ENCODE measurements at regions of chr20 and their contacts with region 1.

Region 1: GRCh38 chr20:48904365-48905296 is 16.9 kb upstream of the ARFGEF2 start:
- DNase-seq: peak; percentile 60
- ATAC-seq: peak; percentile 77
- H3K4me3 ChIP-seq: no peak overlapping the region
- H3K27ac ChIP-seq: no peak overlapping the region
- H3K4me1 ChIP-seq: no peaks in the 10 kb centered on the region
- H3K27me3 ChIP-seq: peaks cover 14% of the 10 kb centered on the region
- CTCF ChIP-seq: peak; percentile 89
- POLR2A ChIP-seq: 0 out of 2 replicates have a peak, but pooled peaks have one; percentile 34
- RAD21 ChIP-seq: peak; percentile 91

Region 2: GRCh38 chr20:48635433-48636310 is 269.0 kb before region 1 on chr20:
- CTCF ChIA-PET with region 1: no interaction called
- POLR2A ChIA-PET with region 1: no interaction called
- dilution Hi-C with region 1: no loop called
- in situ Hi-C with region 1: no loop called
- intact Hi-C with region 1: loop called (anchors 1 kb)
- DNase-seq: peak; percentile 31
- ATAC-seq: peak; percentile 88
- H3K4me3 ChIP-seq: no peak overlapping the region
- H3K27ac ChIP-seq: no peak overlapping the region
- H3K4me1 ChIP-seq: no peaks in the 10 kb centered on the region
- H3K27me3 ChIP-seq: peaks cover 2% of the 10 kb centered on the region; the same call in 1 of the 2 replicates
- CTCF ChIP-seq: peak; percentile 70
- POLR2A ChIP-seq: no peak
- RAD21 ChIP-seq: peak; percentile 75

Region 3: GRCh38 chr20:48657475-48658470 is 246.9 kb before region 1 on chr20:
- CTCF ChIA-PET with region 1: interaction called, 23 read pairs
- POLR2A ChIA-PET with region 1: no interaction called
- dilution Hi-C with region 1: no loop called
- in situ Hi-C with region 1: loop called (anchors 5 kb)
- intact Hi-C with region 1: loop called (anchors 1 kb)
- DNase-seq: peak; percentile 69
- ATAC-seq: peak; percentile 91
- H3K4me3 ChIP-seq: no peak overlapping the region
- H3K27ac ChIP-seq: no peak overlapping the region
- H3K4me1 ChIP-seq: peaks cover 2% of the 10 kb centered on the region; the same call in 1 of the 2 replicates
- H3K27me3 ChIP-seq: 0 out of 2 replicates have a peak, but pooled peaks cover 2% of the 10 kb centered on the region
- CTCF ChIP-seq: peak; percentile 97
- POLR2A ChIP-seq: peak; percentile 51; the same call in 1 of the 2 replicates
- RAD21 ChIP-seq: peak; percentile 99

Region 4: DNA sequence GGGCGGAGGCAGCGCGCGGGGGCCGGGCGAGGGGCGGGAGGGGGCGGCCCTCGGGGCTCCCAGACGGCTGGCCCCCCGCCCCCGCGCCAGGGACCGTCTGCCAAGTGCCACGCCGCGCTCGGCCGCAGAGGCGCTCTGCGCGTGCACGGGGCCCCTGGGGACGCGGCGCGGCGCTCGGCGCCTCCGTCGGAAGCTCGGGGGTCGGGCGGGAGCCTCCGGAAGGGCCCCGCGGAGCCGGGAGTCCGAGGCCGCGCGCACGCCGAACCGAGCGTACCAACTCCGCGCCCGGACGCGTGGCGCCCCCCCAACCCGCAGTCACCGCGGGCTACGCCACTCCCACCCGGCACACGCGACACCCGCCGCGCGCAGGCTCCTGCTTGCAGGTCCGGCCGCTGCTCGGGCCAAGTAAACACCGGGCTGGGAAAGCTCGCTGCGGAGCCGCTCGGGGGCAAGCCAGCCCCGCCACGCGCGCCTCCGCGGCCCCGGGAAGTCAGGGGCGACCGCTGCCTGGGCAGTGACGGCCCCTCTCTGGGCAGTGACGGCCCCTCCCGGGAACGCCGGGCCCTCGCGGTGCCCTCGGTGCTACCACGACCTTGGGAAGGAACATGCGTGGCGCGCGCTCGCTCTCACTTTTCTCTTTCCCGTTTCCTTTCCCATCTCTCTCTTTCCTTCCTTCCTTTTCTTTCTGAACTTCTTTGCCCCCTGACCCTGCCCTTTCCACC is 76.4 kb before region 1 on chr20:
- CTCF ChIA-PET with region 1: no interaction called
- POLR2A ChIA-PET with region 1: no interaction called
- dilution Hi-C with region 1: no loop called
- in situ Hi-C with region 1: no loop called
- intact Hi-C with region 1: loop called (anchors 5 kb)
- DNase-seq: peak; percentile 61
- ATAC-seq: peak; percentile 84
- H3K4me3 ChIP-seq: peak overlapping the region; percentile 58
- H3K27ac ChIP-seq: no peak overlapping the region
- H3K4me1 ChIP-seq: peaks cover 13% of the 10 kb centered on the region; the same call in 1 of the 2 replicates
- H3K27me3 ChIP-seq: peaks cover 18% of the 10 kb centered on the region
- CTCF ChIP-seq: no peak
- POLR2A ChIP-seq: no peak
- RAD21 ChIP-seq: no peak

Region 5: GRCh38 chr20:49179368-49180277 is 275.0 kb after region 1 on chr20:
- CTCF ChIA-PET with region 1: no interaction called
- POLR2A ChIA-PET with region 1: no interaction called
- dilution Hi-C with region 1: no loop called
- in situ Hi-C with region 1: no loop called
- intact Hi-C with region 1: no loop called
- DNase-seq: no peak
- ATAC-seq: no peak; the same call in 1 of the 2 replicates
- H3K4me3 ChIP-seq: no peak overlapping the region
- H3K27ac ChIP-seq: no peak overlapping the region
- H3K4me1 ChIP-seq: peaks cover 6% of the 10 kb centered on the region
- H3K27me3 ChIP-seq: no peaks in the 10 kb centered on the region
- CTCF ChIP-seq: no peak
- POLR2A ChIP-seq: no peak
- RAD21 ChIP-seq: no peak

Measured in IMR-90 (cell line).